Ascending aorta (tissue), 2 donors: ENCODE measurements at regions of chr1 and their contacts with region 1.

Region 1: GRCh38 chr1:85464497-85465098 is 361 bp downstream of the DDAH1 start:
- DNase-seq: peak; percentile 10 to 86
- H3K4me3 ChIP-seq: peak overlapping the region; percentile 86 to 90
- H3K27ac ChIP-seq: peak overlapping the region; percentile 86
- H3K4me1 ChIP-seq: peaks cover 0 to 4% of the 10 kb centered on the region in 2 donors
- H3K27me3 ChIP-seq: no peaks in the 10 kb centered on the region
- CTCF ChIP-seq: no peak

Region 2: DNA sequence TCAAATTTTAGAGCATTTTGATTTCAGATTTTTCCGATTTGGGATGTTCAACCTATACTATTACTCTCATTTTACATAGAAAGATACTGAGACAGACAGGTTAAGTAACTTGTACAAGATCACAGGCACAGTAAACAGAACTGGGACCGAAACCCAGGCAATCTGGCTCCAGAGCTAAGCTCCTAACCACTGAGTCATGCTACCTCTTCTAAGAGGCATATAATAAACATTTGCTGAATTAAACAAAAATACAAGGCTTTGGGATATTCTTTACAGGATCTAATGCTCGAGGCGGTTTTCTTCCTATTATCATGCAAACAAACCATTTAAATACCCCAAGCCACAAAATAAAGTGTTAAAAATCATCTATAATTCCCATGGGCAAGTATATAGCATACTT is 518.0 kb before region 1 on chr1:
- intact Hi-C with region 1: no loop called
- DNase-seq: no peak
- H3K4me3 ChIP-seq: no peak overlapping the region
- H3K27ac ChIP-seq: no peak overlapping the region
- H3K4me1 ChIP-seq: no peaks in the 10 kb centered on the region
- H3K27me3 ChIP-seq: no peaks in the 10 kb centered on the region
- CTCF ChIP-seq: no peak

Region 3: GRCh38 chr1:85330711-85331290 is 133.8 kb before region 1 on chr1:
- intact Hi-C with region 1: loop called (anchors 5 kb)
- DNase-seq: peak in 1 of 2 donors; percentile 83
- H3K4me3 ChIP-seq: no peak overlapping the region
- H3K27ac ChIP-seq: peak overlapping the region; percentile 75 to 84
- H3K4me1 ChIP-seq: peaks cover 11 to 33% of the 10 kb centered on the region in 2 donors
- H3K27me3 ChIP-seq: no peaks in the 10 kb centered on the region
- CTCF ChIP-seq: no peak

Region 4: GRCh38 chr1:85360730-85361493 is 103.7 kb before region 1 on chr1:
- intact Hi-C with region 1: loop called (anchors 5 kb)
- DNase-seq: no peak
- H3K4me3 ChIP-seq: no peak overlapping the region
- H3K27ac ChIP-seq: peak overlapping the region; percentile 41 to 50
- H3K4me1 ChIP-seq: peaks cover 0 to 7% of the 10 kb centered on the region in 2 donors
- H3K27me3 ChIP-seq: no peaks in the 10 kb centered on the region
- CTCF ChIP-seq: no peak

Region 5: DNA sequence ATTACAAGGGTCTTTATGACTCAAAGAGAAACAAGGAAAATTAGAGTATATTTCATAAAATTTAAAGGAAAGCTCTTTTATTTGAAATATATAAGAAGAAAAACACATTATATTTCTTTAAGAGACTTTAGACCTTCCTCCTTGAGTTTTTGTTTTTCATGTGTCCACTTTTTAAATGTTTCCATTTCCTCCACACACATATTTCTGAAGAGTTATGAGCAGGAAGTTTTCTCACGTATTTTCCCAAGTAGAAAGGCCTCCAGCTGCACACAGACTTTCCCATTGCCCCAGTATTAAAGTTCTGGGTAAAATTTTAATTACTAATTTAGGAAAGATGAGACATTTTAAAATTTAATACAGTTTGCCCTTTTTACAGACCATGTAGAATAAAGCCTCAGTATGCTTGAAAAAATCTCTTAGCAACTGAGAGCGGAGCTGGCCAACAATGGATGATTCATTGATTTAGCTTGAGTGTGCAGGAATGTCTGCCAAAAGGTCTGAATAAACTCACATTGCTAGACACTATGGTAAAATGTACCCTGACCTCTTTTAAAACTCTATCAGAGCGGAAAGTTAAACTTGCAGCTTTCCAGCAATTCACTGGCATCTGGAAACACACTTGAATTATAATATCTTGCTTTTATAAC is 57.6 kb before region 1 on chr1:
- intact Hi-C with region 1: loop called (anchors 10 kb)
- DNase-seq: peak in 1 of 2 donors; percentile 75
- H3K4me3 ChIP-seq: no peak overlapping the region
- H3K27ac ChIP-seq: peak overlapping the region; percentile 73 to 85
- H3K4me1 ChIP-seq: peaks cover 7 to 30% of the 10 kb centered on the region in 2 donors
- H3K27me3 ChIP-seq: no peaks in the 10 kb centered on the region
- CTCF ChIP-seq: no peak

Region 6: DNA sequence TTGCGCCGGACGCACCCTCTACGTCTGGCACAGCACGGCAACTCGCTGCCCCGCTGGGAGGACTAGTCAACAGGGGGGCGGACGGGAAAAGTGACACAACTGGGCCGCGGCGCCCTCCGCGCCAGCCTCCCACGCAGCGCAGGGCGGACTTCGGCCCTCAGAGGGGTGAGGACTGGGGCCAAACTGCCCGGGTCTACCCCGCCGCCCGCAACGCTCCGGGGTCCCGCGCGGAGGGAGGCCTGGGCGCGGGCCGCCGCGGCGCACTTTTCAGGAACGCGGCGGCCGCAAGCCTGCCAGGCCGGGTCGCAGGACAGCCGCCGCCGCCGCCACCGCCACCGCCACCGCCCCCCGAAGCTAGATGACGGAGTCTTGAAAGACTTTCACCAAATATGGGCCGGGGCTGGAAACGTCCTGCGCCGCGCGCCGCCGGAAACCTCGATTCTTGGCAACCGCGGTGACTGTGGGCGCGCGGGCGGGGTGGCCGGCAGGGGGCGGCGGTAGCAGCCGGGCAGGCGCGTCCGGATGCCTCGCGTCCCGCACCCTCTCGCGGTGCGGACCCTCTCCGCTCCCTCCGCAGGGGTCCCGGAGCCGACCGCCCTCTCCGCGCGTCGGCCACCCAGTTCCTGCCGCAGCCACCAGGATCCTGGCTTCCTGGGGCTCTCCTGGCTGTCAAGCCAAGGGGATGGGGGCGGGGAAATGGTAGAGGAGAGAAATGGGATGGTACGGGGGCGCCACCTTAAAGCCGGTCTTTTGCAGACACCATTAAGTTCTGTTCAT is 112.2 kb after region 1 on chr1:
- intact Hi-C with region 1: loop called (anchors 2 kb)
- DNase-seq: peak; percentile 57 to 96
- H3K4me3 ChIP-seq: peak overlapping the region; percentile 62 to 88
- H3K27ac ChIP-seq: peak overlapping the region; percentile 92 to 96
- H3K4me1 ChIP-seq: peaks cover 5 to 23% of the 10 kb centered on the region in 2 donors
- H3K27me3 ChIP-seq: no peaks in the 10 kb centered on the region
- CTCF ChIP-seq: peak; percentile 59 to 93 (median 67)

Region 7: DNA sequence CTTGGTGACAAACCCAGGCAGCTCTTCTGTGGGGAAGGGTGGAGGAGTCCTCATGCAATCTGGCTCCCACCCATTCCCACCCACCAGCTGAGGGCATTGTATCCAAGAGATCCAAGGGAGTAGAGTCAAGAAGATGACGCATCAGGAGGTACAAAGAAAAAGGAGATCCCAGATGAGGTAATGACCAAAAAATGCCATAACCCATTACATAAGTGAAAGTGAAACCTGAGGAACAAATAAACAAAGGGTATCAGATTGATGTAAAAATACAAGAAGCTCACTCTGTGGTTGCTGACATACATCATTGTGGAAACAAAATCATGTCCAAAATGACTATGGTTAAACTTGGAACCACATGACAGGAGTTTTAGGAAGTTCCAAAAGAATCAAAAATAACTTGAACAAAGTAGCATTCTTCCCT is 158.5 kb after region 1 on chr1:
- intact Hi-C with region 1: no loop called
- DNase-seq: no peak
- H3K4me3 ChIP-seq: no peak overlapping the region
- H3K27ac ChIP-seq: no peak overlapping the region
- H3K4me1 ChIP-seq: peaks cover 0 to 7% of the 10 kb centered on the region in 2 donors
- H3K27me3 ChIP-seq: no peaks in the 10 kb centered on the region
- CTCF ChIP-seq: no peak

Region 8: GRCh38 chr1:85692730-85693314 is 228.2 kb after region 1 on chr1:
- intact Hi-C with region 1: loop called (anchors 10 kb)
- DNase-seq: no peak
- H3K4me3 ChIP-seq: no peak overlapping the region
- H3K27ac ChIP-seq: no peak overlapping the region
- H3K4me1 ChIP-seq: peaks cover 0 to 2% of the 10 kb centered on the region in 2 donors
- H3K27me3 ChIP-seq: no peaks in the 10 kb centered on the region
- CTCF ChIP-seq: peak; percentile 29 to 64 (median 55)

Region 9: GRCh38 chr1:86137436-86137835 is 672.8 kb after region 1 on chr1:
- intact Hi-C with region 1: no loop called
- DNase-seq: no peak
- H3K4me3 ChIP-seq: no peak overlapping the region
- H3K27ac ChIP-seq: no peak overlapping the region
- H3K4me1 ChIP-seq: no peaks in the 10 kb centered on the region
- H3K27me3 ChIP-seq: no peaks in the 10 kb centered on the region
- CTCF ChIP-seq: no peak